Heart left ventricle (tissue), 16 donors: ENCODE measurements at regions of chr15 and their contacts with region 1.

Region 1: GRCh38 chr15:52679232-52680040 is at the start of gene ATOSA:
- DNase-seq: peak; percentile 93 to 95 (median 94)
- ATAC-seq: peak; percentile 84 to 96 (median 94)
- H3K4me3 ChIP-seq: peak within 1 kb of the TSS; percentile 68 to 95 (median 88)
- H3K27ac ChIP-seq: peak within 1 kb of the TSS; percentile 93 to 99 (median 97)
- H3K4me1 ChIP-seq: peaks cover 7 to 47% (median 32%) of the 10 kb centered on the region in 12 donors
- H3K27me3 ChIP-seq: no peaks in the 10 kb centered on the region
- CTCF ChIP-seq: peak in 1 of 12 donors; percentile 21
- POLR2A ChIP-seq: peak in 1 of 2 donors; percentile 85
- total RNA-seq, gene ATOSA: 21.3 to 51.5 (median 29.8) TPM

Region 2: GRCh38 chr15:52579852-52580251 is 99.6 kb before region 1 on chr15:
- intact Hi-C with region 1: loop called in 1 of 10 experiments (anchors 10 kb)
- DNase-seq: no peak
- ATAC-seq: no peak
- H3K4me3 ChIP-seq: no peak overlapping the region
- H3K27ac ChIP-seq: no peak overlapping the region
- H3K4me1 ChIP-seq: no peaks in the 10 kb centered on the region
- H3K27me3 ChIP-seq: no peaks in the 10 kb centered on the region
- CTCF ChIP-seq: no peak
- POLR2A ChIP-seq: no peak

Region 3: GRCh38 chr15:52626671-52627369 is 52.6 kb before region 1 on chr15:
- intact Hi-C with region 1: loop called in 2 of 10 experiments (anchors 10 kb)
- DNase-seq: no peak
- ATAC-seq: no peak
- H3K4me3 ChIP-seq: no peak overlapping the region
- H3K27ac ChIP-seq: no peak overlapping the region
- H3K4me1 ChIP-seq: peaks cover 0 to 25% (median 3%) of the 10 kb centered on the region in 12 donors
- H3K27me3 ChIP-seq: no peaks in the 10 kb centered on the region
- CTCF ChIP-seq: no peak
- POLR2A ChIP-seq: no peak

Region 4: GRCh38 chr15:52730173-52730572 is 50.7 kb after region 1 on chr15:
- intact Hi-C with region 1: loop called in 7 of 10 experiments (anchors 5 to 10 kb)
- DNase-seq: no peak
- ATAC-seq: no peak
- H3K4me3 ChIP-seq: no peak overlapping the region
- H3K27ac ChIP-seq: no peak overlapping the region
- H3K4me1 ChIP-seq: peaks cover 0 to 32% (median 10%) of the 10 kb centered on the region in 12 donors
- H3K27me3 ChIP-seq: no peaks in the 10 kb centered on the region
- CTCF ChIP-seq: no peak
- POLR2A ChIP-seq: no peak